ENCODE measurements at regions of chr17 and their contacts with region 1.

Region 1: DNA sequence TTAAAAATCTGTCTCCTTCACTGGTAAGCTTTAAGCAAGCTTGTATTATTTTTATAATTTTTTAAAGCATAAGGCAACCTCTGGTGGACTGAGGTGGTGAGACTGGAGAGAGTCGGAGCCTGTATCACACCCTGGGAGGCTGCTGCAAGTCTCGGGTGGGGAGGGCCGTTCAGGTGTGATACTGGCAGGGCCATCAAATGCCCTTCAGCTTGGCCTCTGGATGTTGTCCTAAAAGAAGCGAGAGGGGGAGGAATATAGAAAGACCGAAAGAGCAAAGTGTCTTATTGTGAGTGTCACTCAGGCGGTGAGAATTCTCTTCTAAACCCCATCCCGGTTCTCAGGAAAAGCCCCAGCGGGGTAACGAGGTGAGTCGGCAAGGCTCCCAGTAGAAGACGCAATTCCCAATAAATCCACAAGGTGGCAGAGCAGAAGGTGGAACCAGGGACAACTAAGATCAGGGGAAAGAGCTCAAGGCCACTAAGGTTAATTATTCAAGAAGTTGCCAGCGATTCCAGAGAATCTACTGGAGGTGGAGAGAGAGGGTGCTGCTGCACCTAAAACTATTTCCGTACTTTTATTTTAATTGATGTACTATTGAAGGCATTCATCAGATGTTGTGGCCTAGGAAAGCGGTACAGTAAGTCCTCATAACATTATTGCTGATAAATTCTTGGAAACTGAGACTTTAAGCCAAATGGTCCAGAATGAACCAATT is 14.1 kb downstream of the C17orf67 start:
- ATAC-seq: peak; percentile 58 to 91 (median 68)
- H3K4me3 ChIP-seq: no peak overlapping the region
- H3K27ac ChIP-seq: no peak overlapping the region
- H3K4me1 ChIP-seq: peaks cover 0 to 4% of the 10 kb centered on the region in 2 donors

Region 2: DNA sequence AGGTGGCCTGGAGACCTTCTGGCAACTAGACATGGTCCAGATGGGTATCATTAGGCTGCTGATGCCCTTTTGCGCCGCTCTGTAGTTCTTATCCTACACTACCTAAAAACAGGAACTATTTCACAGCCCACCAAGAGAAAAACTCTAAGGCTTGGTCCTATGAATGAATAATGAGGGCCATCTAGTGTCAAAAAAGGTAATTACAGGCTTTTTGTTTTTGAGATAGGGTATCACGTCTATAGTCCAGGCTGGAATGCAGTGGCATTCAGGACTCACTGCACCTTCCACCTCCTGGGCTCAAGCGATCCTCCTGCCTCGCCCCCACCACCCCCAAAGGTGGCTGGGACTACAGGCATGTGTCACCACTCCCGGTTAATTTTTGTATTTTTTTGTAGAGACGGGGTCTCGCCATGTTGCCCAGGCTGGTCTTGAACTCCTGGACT is 120.3 kb after region 1 on chr17:
- in situ Hi-C with region 1: loop called in 2 of 9 experiments (anchors 25 kb)
- ATAC-seq: peak; percentile 49 to 81 (median 68)
- H3K4me3 ChIP-seq: no peak overlapping the region
- H3K27ac ChIP-seq: no peak overlapping the region
- H3K4me1 ChIP-seq: no peaks in the 10 kb centered on the region

Region 3: DNA sequence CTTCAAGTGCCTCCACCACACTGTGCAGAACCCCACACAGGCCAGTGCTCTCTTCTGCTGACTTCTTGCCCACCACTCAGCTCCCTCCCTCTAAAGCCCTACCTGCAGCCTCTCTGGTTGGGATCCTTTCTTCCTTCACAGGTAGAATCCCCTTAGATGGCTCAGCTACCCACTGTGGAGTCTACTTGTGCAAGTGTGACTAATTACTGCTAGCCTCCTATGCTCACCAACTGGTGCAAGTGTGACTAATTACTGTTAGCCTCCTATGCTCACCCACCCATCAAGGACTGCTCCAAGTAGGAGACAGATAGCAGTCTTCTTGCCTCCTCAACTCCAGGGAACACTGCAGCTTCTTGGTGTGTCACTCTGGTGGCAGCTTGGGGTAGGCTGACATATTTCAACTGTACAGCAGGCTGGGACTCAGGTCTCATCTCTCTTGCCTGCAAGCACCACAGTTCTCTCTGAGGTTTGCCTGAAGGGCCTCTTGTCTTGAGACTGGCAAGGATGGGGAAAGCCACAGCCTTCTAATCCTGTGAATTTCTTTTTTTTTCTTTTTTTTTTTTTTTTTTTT is 1828.7 kb after region 1 on chr17:
- in situ Hi-C with region 1: no loop called
- ATAC-seq: peak in 1 of 8 experiments; percentile 23
- H3K4me3 ChIP-seq: no peak overlapping the region
- H3K27ac ChIP-seq: no peak overlapping the region
- H3K4me1 ChIP-seq: no peaks in the 10 kb centered on the region